ENCODE measurements at regions of chr17 and their contacts with region 1.

Region 1: DNA sequence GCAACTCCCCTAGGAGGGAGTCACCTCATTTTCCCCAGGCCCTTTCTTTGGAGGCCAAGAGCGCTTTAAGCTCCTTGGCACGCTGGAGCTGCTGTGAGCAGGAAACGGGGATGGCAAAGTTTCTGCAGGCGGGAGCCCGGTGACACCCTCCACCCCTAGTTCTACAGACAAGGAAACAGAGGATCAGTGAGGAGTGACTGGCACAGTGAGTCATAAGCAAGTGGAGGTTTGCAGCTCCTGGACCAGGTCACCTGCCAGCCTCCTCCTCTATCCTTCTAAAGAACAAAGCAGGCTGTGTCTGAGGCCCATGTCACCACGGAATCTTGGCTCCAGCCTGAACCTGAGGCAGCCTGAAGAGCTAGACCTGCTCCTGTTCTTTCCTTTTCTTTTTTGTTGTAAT is 141.9 kb downstream of the TMEM132E start:
- DNase-seq: no peak

Region 2: DNA sequence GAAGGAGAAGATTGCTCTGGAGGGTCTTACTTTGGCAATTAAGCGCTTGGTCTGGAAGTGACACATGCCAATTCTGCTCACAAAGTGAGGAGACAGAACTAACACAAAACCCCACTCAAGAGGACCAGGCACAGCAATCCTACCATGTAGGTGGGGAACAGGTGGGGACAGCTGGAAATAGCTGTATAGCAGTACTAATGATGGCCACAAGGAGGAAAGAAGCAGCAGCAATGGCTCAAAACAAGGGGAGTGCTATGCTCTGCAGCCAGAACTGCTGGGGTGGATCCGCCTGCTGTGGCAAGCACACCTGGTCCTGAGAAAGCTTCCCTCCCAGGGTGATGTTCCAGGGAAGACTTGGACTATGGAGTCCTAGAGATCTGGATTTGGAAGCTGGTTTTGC is 158.9 kb before region 1 on chr17:
- intact Hi-C with region 1: no loop called
- DNase-seq: no peak

Region 3: GRCh38 chr17:34665150-34665806 is 56.0 kb before region 1 on chr17:
- intact Hi-C with region 1: loop called (anchors 10 kb)
- DNase-seq: peak; percentile 41